ENCODE measurements at regions of chr11 and their contacts with region 1.

Region 1: DNA sequence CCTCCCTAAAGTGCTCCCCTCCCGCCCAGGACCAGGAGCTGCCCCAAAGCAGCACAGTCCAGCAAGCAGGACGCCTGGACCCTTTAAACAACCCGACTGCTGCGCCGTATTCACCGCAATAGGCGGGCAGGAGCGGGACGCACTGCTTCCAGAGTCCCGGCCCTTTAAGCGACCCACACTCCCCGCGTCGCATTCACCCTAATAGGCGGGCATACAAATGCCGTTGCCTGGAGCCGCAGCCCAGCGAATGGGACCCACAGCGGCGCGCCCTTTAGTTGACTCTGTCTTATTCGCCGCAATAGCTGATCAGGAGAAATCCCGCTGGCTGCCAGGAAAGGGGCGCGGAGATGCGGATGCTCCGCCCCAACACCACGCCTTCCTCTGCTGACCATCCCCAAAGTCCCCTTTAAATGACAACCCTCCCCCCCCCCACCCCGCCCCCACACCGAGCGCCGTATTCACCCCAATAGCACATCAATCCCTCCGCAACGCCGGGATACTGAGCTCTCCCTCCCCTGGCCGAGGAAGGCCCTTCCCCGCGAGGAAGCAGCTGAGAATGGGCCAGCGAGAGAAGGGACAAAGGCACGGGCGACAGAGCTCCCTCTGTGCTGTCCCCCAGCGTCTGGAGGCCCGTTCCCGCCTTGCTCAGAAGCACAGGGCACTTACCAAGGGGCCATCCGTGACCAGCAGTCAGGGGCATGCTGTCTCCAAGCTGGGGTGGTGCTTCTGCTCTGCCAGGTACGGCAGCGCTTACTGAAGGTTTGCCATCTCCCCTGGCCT is 4.7 kb downstream of the OSBPL5 start:
- DNase-seq: peak; percentile 57 to 95
- H3K4me3 ChIP-seq: peak overlapping the region; percentile 64 to 86
- H3K27ac ChIP-seq: peak overlapping the region; percentile 91 to 93
- H3K4me1 ChIP-seq: peaks cover 40 to 63% of the 10 kb centered on the region in 2 donors
- H3K27me3 ChIP-seq: no peaks in the 10 kb centered on the region
- CTCF ChIP-seq: no peak

Region 2: GRCh38 chr11:2930704-2931428 is 229.6 kb before region 1 on chr11:
- intact Hi-C with region 1: loop called (anchors 5 kb)
- DNase-seq: peak in 1 of 2 donors; percentile 84
- H3K4me3 ChIP-seq: peak overlapping the region; percentile 75 to 90
- H3K27ac ChIP-seq: peak overlapping the region; percentile 76 to 82
- H3K4me1 ChIP-seq: peaks cover 6 to 30% of the 10 kb centered on the region in 2 donors
- H3K27me3 ChIP-seq: no peaks in the 10 kb centered on the region
- CTCF ChIP-seq: peak; percentile 26 to 78 (median 56)

Region 3: DNA sequence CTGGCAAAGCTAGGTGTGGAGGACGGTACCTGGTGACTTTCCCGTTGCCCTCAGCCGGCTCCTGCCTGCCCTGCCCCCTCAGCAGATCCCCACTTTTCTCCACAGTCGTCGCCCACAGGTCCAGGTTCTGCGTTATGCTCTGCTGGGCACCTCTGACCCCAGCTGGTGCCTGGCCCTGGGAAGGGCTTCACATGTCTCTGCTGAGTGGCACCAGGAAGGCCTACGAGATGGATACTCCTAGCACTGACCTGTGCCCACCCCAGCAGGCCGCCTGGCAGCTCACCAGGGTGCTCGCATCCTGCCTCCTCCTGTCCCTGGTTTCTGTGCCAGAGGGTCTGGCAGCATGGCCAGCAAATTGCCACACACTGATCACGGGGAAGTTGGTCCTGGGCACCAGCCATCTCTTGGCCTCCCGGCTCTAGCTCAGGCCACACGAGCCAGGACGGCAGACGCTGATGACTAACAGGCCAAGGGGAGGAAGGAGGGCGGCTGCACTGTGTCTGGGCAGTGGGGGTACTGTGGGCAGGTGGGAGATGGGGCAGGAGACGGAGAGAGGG is 117.0 kb before region 1 on chr11:
- intact Hi-C with region 1: loop called (anchors 5 kb)
- DNase-seq: peak; percentile 76 to 95
- H3K4me3 ChIP-seq: no peak overlapping the region
- H3K27ac ChIP-seq: peak overlapping the region; percentile 85 to 87
- H3K4me1 ChIP-seq: peaks cover 4 to 20% of the 10 kb centered on the region in 2 donors
- H3K27me3 ChIP-seq: no peaks in the 10 kb centered on the region
- CTCF ChIP-seq: no peak

Region 4: DNA sequence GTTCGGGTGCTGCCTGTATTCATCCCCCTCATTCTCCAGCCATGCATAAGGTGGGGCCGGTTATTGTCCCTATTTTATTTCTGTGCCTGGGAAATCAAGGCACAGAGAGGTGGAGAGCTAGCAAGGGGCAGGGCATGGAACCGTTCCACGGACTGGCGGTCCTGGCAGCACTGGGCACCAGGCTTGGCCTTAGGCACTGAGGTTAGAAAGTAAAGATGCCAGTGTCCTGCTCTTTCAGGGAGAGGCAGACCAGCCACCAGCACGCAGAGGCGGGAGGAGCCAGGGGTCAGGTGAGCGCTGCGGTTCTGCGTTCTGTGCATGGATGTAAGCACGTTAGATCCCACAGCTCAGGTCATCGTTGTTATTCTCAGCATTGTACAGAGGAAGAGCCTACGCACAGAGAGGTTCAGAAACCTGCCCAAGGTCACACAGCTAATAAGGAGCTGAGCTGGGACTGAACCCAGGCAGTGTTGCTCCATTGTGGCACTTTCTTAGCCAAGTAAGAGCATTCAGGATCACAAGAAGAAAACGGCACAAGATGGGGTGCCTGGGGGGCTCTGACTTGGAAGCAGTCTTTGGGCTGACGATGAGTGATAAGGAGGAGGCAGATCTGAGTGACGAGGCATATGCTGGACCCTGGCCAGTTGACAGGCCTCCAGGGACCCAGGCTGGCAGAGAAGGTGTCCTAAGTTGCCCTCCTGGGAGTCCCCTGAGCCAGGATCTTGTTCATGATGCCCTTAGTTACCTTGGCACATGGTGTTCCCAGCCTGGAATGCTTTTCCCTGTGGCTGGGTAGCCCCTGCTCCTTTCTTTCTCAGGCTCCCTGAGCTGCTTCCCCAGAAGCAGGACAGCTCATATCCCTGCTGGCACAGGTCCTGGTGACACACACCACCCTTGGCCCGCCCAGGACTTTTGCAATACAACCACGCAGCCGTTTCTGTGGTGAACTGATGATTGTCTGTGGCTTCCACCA is 36.4 kb before region 1 on chr11:
- intact Hi-C with region 1: loop called (anchors 1 kb)
- DNase-seq: peak; percentile 84 to 98
- H3K4me3 ChIP-seq: no peak overlapping the region
- H3K27ac ChIP-seq: peak overlapping the region; percentile 84
- H3K4me1 ChIP-seq: peaks cover 18 to 19% of the 10 kb centered on the region in 2 donors
- H3K27me3 ChIP-seq: no peaks in the 10 kb centered on the region
- CTCF ChIP-seq: no peak

Region 5: DNA sequence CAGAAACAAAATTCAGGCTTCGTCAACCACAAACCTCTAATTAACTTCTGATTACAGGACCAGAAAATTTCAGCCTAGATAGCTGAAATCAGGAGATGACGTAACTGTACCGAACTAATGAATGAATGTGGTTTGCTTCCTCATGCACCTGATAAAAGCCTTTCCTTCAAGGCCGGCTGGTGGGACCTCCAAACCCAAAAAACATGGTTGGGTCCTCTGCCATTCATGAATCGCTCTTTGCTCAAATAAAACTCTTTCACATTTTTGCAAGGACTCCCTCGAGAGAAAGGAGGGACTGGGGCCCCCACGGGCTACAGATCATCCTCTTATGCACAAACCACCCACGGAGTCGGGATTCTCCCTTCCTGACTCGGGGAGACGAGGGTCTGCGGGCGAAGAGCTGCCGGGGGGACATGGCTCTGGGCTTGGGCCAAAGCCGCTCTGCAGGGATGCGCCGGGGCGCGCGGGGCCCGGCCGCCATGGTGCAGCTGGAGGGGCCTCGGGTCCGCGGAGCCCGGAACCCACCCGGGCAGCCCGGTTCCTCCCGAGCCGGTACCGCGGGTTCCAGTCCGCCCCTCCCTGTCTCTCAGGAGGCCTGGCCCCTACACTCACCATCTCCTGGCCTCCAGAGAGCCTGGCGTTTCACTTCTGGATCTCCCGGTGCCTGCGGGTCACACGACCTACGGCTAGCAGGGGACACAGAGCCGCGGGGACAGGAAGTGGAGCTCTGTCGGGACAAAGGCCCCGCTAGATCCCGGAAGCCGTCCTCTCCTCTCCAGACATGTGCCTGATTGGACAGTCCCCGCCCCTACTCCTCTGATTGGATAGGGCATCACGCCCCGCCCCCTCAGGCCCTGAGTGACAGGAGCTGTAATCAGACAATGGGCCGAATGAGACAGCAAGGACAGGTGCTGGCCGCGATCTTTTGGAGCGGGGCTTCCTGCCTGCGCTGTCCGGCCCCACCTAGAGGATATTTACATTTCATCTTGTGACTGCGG is 218.3 kb after region 1 on chr11 and contains the start of gene ZNF195:
- intact Hi-C with region 1: loop called (anchors 5 kb)
- DNase-seq: peak; percentile 98 to 100
- H3K4me3 ChIP-seq: peak within 1 kb of the TSS; percentile 79 to 95
- H3K27ac ChIP-seq: peak within 1 kb of the TSS; percentile 73 to 78
- H3K4me1 ChIP-seq: peaks cover 3 to 9% of the 10 kb centered on the region in 2 donors
- H3K27me3 ChIP-seq: no peaks in the 10 kb centered on the region
- CTCF ChIP-seq: no peak
- total RNA-seq, gene ZNF195: 1.3 TPM